ENCODE measurements at regions of chr16 and their contacts with region 1.

Region 1: GRCh38 chr16:10944249-10945064 is at the start of gene CLEC16A:
- DNase-seq: peak; percentile 96
- ATAC-seq: peak; percentile 80
- H3K4me3 ChIP-seq: peak within 1 kb of the TSS; percentile 83
- H3K27ac ChIP-seq: peak within 1 kb of the TSS; percentile 68
- H3K4me1 ChIP-seq: peaks cover 21% of the 10 kb centered on the region
- H3K27me3 ChIP-seq: no peaks in the 10 kb centered on the region
- CTCF ChIP-seq: no peak
- POLR2A ChIP-seq: peak; percentile 75
- RAD21 ChIP-seq: no peak
- total RNA-seq, gene CLEC16A: 16.5 and 18.3 TPM in 2 replicates

Region 2: DNA sequence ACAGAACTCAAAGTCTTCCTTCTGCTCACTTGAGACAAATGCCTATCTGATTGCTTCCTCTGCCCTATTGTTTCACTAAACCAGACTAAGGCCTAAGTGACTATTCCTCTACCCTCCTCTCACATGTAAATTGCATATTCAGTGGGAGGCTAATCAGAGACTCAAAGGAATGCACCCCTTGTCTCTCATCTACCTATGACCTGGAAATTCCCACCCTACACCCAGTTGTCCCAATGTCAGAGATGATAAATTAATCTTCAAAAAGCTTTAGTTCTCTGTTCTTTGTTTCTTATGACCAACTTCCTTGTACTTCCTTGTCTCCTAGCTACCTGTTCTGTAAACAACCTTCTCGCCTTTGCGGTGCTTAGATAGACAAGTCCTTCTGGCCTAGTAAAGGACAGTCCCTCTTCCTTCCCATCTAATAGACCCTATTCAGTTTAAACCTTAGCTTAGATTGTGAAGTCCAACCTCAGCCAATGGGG is 440.0 kb before region 1 on chr16:
- CTCF ChIA-PET with region 1: no interaction called
- POLR2A ChIA-PET with region 1: interaction called, 10 read pairs
- dilution Hi-C with region 1: no loop called
- in situ Hi-C with region 1: no loop called
- intact Hi-C with region 1: no loop called
- DNase-seq: no peak
- ATAC-seq: no peak
- H3K4me3 ChIP-seq: no peak overlapping the region
- H3K27ac ChIP-seq: no peak overlapping the region
- H3K4me1 ChIP-seq: no peaks in the 10 kb centered on the region
- H3K27me3 ChIP-seq: no peaks in the 10 kb centered on the region
- CTCF ChIP-seq: no peak
- POLR2A ChIP-seq: no peak
- RAD21 ChIP-seq: no peak

Measured in IMR-90 (cell line).